Activated CD4-positive, alpha-beta memory T cell treated with anti-CD3 and anti-CD28 coated beads, Interleukin-2, amount 10 ng/mL, durations not matched to agents 7 days and 5 days (primary cell): ENCODE measurements at regions of chr6 and their contacts with region 1.

Region 1: GRCh38 chr6:90458353-90459224 is 128.3 kb downstream of the MAP3K7 start:
- DNase-seq: peak; percentile 82
- H3K4me3 Mint-ChIP-seq: peak overlapping the region; percentile 56
- H3K27ac Mint-ChIP-seq: peak overlapping the region; percentile 89
- H3K4me1 Mint-ChIP-seq: peaks cover 74% of the 10 kb centered on the region
- H3K27me3 Mint-ChIP-seq: no peaks in the 10 kb centered on the region

Region 2: GRCh38 chr6:90251295-90251992 is 207.1 kb before region 1 on chr6:
- CTCF ChIA-PET with region 1: no interaction called
- POLR2A ChIA-PET with region 1: no interaction called
- DNase-seq: no peak
- H3K4me3 Mint-ChIP-seq: no peak overlapping the region
- H3K27ac Mint-ChIP-seq: no peak overlapping the region
- H3K4me1 Mint-ChIP-seq: peaks cover 44% of the 10 kb centered on the region
- H3K27me3 Mint-ChIP-seq: no peaks in the 10 kb centered on the region

Region 3: GRCh38 chr6:90296346-90297114 is 162.1 kb before region 1 on chr6 and contains the start of gene BACH2:
- CTCF ChIA-PET with region 1: interaction called, 6 read pairs
- POLR2A ChIA-PET with region 1: interaction called, 12 read pairs
- DNase-seq: peak; percentile 95
- H3K4me3 Mint-ChIP-seq: peak within 1 kb of the TSS; percentile 87
- H3K27ac Mint-ChIP-seq: peak within 1 kb of the TSS; percentile 82
- H3K4me1 Mint-ChIP-seq: peaks cover 27% of the 10 kb centered on the region
- H3K27me3 Mint-ChIP-seq: peaks cover 44% of the 10 kb centered on the region
- total RNA-seq, gene BACH2: 30.3 to 31.1 TPM

Region 4: DNA sequence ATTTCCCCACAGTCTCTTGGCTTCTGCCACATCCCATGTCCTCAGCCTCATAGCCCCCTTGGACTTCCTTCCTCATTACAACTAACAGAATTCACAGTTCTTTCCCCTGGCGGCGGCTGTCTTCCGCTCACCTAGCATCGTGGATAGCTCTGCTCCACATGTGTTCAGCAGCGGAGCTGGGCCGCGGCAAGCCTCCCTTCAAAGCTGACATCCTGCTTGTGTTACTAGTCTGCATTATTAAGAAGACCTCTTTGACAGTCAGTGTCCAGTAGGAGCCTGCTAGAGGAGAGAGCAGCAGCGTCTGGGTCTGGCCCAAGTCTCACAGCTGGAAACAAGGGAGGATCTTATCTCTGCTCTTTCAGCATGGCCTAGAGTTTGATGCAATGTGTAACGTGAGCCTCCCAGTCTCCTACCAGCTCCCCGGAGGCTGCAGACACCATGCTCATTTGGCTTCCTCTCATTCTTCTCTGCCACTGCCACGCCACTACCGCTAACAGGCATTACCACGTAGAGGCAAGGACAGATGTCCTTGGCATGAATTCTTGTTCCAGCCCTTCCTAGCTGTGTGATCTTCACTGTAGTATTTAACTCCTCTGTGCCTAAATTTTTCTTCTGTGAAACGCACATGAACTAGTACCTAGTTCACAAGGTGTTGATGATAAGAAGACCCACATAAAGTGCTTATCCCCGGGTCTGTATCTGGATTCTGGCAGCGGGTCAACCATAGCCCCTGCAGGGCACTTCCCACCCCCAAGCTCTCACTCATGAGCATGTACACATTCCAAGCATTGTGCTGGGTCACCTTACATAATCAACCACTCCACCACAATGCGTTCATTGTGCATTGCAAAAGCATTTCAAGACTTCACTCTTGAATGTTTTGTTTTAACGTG is 54.9 kb before region 1 on chr6:
- CTCF ChIA-PET with region 1: interaction called, 6 read pairs
- POLR2A ChIA-PET with region 1: interaction called, 109 read pairs
- DNase-seq: no peak
- H3K4me3 Mint-ChIP-seq: peak overlapping the region; percentile 10
- H3K27ac Mint-ChIP-seq: peak overlapping the region; percentile 94
- H3K4me1 Mint-ChIP-seq: peaks cover 86% of the 10 kb centered on the region
- H3K27me3 Mint-ChIP-seq: peaks cover 5% of the 10 kb centered on the region

Region 5: GRCh38 chr6:90444160-90444714 is 14.4 kb before region 1 on chr6:
- CTCF ChIA-PET with region 1: interaction called, 6 read pairs
- POLR2A ChIA-PET with region 1: interaction called, 11 read pairs
- DNase-seq: no peak
- H3K4me3 Mint-ChIP-seq: peak overlapping the region; percentile 2
- H3K27ac Mint-ChIP-seq: peak overlapping the region; percentile 3
- H3K4me1 Mint-ChIP-seq: peaks cover 26% of the 10 kb centered on the region
- H3K27me3 Mint-ChIP-seq: no peaks in the 10 kb centered on the region

Region 6: GRCh38 chr6:90574610-90575009 is 116.0 kb after region 1 on chr6:
- CTCF ChIA-PET with region 1: no interaction called
- POLR2A ChIA-PET with region 1: no interaction called
- DNase-seq: no peak
- H3K4me3 Mint-ChIP-seq: no peak overlapping the region
- H3K27ac Mint-ChIP-seq: no peak overlapping the region
- H3K4me1 Mint-ChIP-seq: peaks cover 3% of the 10 kb centered on the region
- H3K27me3 Mint-ChIP-seq: no peaks in the 10 kb centered on the region